Calu3 (cell line): ENCODE measurements at regions of chr6 and their contacts with region 1.

Region 1: DNA sequence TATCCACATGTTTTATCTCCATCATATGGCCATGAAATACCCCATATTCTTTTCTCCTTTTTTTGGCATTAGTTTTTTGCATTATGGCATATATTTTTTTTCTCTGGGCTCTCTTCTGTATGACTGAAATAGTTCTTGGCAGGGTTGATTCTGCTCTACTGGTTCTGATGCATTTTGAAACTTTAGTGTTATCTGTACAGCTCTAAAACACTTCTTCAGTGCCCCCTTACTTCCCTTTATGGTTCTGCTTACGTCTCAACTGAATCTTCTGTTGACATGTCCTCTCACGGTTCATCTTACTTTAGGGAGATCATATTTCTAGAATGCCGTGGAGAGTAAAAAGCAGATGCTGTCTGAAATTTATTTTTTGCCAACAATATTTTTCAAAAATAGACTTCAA is 23.2 kb upstream of the TXNDC5 start:
- DNase-seq: no peak
- H3K4me3 Mint-ChIP-seq: no peak overlapping the region
- H3K27ac Mint-ChIP-seq: no peak overlapping the region
- H3K4me1 Mint-ChIP-seq: no peaks in the 10 kb centered on the region
- H3K27me3 Mint-ChIP-seq: no peaks in the 10 kb centered on the region
- CTCF ChIP-seq: no peak

Region 2: DNA sequence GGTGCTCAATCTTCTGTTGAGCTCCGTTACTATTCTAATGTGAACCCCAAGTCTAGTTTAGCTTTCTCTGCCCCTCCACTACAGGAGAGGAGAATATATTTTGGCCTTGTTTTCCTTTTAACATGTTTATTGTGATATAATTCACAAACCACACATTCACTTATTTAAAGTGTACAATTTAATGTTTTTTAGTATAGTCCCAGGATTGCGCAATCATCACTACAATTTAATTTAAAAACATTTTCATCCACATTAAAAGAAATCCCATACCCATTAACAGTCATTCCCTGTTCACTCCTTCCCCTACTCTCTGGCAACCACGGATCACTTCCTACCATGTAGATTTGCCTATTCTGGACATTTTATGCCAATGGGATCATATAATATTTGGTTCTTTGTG is 272.4 kb before region 1 on chr6:
- CTCF ChIA-PET with region 1: no interaction called
- intact Hi-C with region 1: loop called (anchors 5 kb)
- DNase-seq: no peak
- H3K4me3 Mint-ChIP-seq: no peak overlapping the region
- H3K27ac Mint-ChIP-seq: no peak overlapping the region
- H3K4me1 Mint-ChIP-seq: no peaks in the 10 kb centered on the region
- H3K27me3 Mint-ChIP-seq: peaks cover 23% of the 10 kb centered on the region
- CTCF ChIP-seq: no peak